MCF 10A (cell line): ENCODE measurements at regions of chr5 and their contacts with region 1.

Region 1: GRCh38 chr5:15995341-15996052 is 184.1 kb downstream of the MARCHF11 start:
- DNase-seq: peak; percentile 56
- H3K4me3 Mint-ChIP-seq: no peak overlapping the region
- H3K27ac Mint-ChIP-seq: no peak overlapping the region
- H3K4me1 Mint-ChIP-seq: peaks cover 11% of the 10 kb centered on the region
- H3K27me3 Mint-ChIP-seq: peaks cover 15% of the 10 kb centered on the region
- CTCF ChIP-seq: peak; percentile 52

Region 2: DNA sequence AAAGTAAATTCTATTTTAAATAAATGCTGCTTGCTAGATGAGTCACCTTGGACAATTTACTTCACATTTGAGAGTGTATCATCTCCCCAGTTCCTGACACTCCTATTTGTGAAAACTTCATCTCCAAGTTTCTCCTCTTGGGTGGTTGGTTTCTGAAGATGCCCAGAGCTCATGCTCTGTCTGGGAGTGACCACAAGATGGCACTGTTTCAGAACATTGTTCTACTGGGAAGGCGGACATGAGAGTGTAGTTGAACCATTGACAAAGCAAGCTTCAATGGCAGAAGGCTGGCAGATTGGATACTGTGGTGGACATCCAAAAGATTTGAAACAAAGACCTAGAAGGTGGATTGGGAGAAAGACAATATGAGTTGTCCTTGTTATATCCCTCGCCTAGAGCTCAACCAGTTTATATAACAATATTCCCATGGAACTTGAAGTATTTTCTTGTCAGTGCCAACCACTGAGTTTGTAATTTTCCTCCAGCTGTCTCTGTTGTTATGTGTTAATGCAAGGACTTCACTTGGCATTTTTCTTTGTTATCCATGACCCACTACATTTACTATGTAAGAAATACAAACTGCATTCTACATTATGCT is 889.6 kb before region 1 on chr5:
- CTCF ChIA-PET with region 1: interaction called, 67 read pairs
- POLR2A ChIA-PET with region 1: no interaction called
- intact Hi-C with region 1: loop called (anchors 1 kb)
- DNase-seq: peak; percentile 67
- H3K4me3 Mint-ChIP-seq: no peak overlapping the region
- H3K27ac Mint-ChIP-seq: no peak overlapping the region
- H3K4me1 Mint-ChIP-seq: no peaks in the 10 kb centered on the region
- H3K27me3 Mint-ChIP-seq: no peaks in the 10 kb centered on the region
- CTCF ChIP-seq: peak; percentile 68

Region 3: GRCh38 chr5:15383469-15383868 is 612.0 kb before region 1 on chr5:
- CTCF ChIA-PET with region 1: interaction called, 17 read pairs
- POLR2A ChIA-PET with region 1: no interaction called
- intact Hi-C with region 1: loop called (anchors 1 kb)
- DNase-seq: peak; percentile 16
- H3K4me3 Mint-ChIP-seq: no peak overlapping the region
- H3K27ac Mint-ChIP-seq: no peak overlapping the region
- H3K4me1 Mint-ChIP-seq: no peaks in the 10 kb centered on the region
- H3K27me3 Mint-ChIP-seq: peaks cover 31% of the 10 kb centered on the region
- CTCF ChIP-seq: peak; percentile 40

Region 4: DNA sequence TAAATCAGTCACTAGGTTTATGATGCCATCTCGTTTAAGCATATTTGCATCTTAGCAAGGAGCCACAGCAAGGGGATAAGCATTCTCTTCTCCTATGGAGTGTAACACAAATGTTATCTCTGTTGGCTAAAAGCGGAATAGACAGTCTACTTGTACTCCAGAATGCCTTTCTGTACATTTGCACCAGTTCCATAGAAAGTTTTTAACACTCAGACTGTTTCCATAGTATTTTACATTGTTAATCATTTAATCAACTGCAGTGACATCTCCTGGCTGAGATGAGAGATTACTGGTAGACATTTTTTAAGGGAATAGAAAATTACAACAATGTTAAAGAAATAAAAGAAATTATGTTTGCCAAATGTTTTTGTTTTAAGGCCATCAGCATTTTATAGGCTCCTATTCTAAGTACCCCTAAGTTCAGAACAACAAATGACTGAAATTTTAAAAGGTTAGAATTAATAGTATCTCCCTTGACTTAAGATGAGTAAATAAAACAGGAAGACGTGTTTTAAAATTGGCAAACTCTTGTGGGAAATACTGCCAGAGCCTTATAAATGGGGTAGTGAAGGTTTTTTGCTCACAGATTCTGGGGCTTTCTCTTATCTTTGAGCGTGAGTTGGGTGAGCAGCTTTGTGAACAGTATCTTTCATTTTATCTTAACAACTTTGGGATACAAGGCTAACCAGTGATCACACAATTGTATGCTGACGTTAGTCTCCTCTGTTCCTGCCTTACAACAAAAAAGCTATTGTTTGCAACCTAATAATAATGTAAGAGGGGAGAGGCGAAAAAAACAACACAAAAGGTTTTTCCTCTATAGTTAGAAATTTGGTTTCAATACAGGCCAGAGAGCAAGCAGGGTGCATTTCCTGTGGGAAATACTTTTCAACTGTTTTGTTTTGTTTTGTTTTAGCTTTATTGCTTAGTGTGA is 201.2 kb before region 1 on chr5:
- CTCF ChIA-PET with region 1: interaction called, 4 read pairs
- POLR2A ChIA-PET with region 1: interaction called, 4 read pairs
- intact Hi-C with region 1: loop called (anchors 1 kb)
- DNase-seq: no peak
- H3K4me3 Mint-ChIP-seq: no peak overlapping the region
- H3K27ac Mint-ChIP-seq: no peak overlapping the region
- H3K4me1 Mint-ChIP-seq: no peaks in the 10 kb centered on the region
- H3K27me3 Mint-ChIP-seq: peaks cover 12% of the 10 kb centered on the region
- CTCF ChIP-seq: peak; percentile 35

Region 5: DNA sequence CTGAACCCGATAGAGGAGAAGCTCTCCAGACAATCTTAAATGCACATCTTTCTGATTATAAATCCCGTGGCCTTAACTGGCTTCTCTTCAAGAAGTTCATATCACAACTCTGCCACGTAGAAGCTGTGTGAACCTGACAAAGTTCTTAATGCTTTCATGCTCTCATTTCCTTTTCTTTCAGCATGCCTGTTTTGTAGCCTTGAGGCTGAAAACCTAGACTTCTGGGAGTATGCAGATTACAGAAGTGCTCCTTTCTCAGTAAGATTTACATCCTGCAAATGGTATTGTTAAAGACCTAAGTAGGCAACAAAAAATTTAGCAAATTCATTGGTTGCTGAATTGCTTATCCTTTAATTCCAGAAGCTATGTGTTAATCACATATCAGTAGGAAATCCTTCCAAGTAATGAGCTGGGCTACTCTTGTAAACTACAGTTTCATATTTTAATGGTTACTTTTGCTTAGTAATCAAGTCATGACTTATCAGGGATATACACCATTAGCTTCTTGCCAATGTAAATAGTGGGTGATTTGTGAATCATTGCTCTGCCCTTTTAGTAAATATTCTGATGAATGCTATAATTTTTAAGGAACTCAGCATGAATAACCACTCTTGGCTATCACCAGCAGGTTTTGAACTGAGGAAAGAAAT is 160.8 kb before region 1 on chr5:
- CTCF ChIA-PET with region 1: interaction called, 6 read pairs
- POLR2A ChIA-PET with region 1: no interaction called
- intact Hi-C with region 1: loop called (anchors 5 kb)
- DNase-seq: peak; percentile 52
- H3K4me3 Mint-ChIP-seq: no peak overlapping the region
- H3K27ac Mint-ChIP-seq: no peak overlapping the region
- H3K4me1 Mint-ChIP-seq: peaks cover 13% of the 10 kb centered on the region
- H3K27me3 Mint-ChIP-seq: no peaks in the 10 kb centered on the region
- CTCF ChIP-seq: no peak

Region 6: GRCh38 chr5:16178745-16179372 is 183.4 kb after region 1 on chr5:
- CTCF ChIA-PET with region 1: no interaction called
- POLR2A ChIA-PET with region 1: no interaction called
- intact Hi-C with region 1: no loop called
- DNase-seq: peak; percentile 49
- H3K4me3 Mint-ChIP-seq: no peak overlapping the region
- H3K27ac Mint-ChIP-seq: no peak overlapping the region
- H3K4me1 Mint-ChIP-seq: no peaks in the 10 kb centered on the region
- H3K27me3 Mint-ChIP-seq: peaks cover 62% of the 10 kb centered on the region
- CTCF ChIP-seq: no peak